PC-3 (cell line): ENCODE measurements at regions of chr1 and their contacts with region 1.

Region 1: DNA sequence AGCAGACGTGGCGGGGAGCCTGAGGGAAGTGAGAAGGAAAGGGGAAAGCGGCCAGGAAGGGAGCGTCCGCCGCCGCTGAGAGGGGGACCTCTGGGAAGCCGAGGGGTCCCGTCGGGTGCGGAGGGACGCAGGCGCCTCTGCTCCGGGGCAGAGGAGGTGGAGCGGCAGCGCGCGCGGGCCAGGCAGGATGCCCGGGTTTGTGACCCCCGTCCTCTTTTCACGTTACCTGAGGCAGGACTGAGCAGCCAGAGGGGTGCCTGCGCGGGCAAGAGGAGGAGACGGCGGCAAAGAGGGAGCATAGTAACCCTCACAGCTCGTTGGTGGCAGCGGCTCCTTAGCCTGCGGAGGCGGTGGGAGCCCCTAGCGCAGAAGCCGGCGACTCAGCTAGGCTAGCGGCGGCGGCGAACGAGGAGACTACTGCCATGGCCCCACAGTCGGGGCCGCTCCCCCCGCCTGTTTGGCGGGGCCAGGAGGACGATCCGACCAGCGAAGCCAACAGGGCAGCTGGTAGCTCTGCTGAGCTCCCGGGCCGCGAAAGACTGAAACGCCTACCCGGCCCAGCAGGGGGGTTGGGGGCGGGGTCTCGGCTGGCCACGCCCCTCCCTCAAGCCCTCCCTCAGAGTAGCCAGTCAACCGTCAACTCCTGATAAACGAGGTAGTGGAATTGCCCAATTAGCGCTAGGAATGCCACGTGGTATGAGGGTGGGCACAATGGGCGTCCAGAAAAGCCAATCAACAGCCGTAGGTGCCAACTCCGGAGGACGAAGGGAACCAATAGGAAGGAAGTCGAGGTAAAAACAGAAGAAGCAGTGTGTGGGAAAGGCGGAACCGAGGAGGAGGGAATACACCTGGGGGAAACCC is at the start of gene TESK2:
- DNase-seq: peak; percentile 100
- ATAC-seq: peak; percentile 89
- H3K4me3 ChIP-seq: peak within 1 kb of the TSS; percentile 80
- H3K27ac ChIP-seq: no peak within 1 kb of the TSS
- H3K4me1 ChIP-seq: peaks cover 11% of the 10 kb centered on the region
- H3K27me3 ChIP-seq: no peaks in the 10 kb centered on the region
- CTCF ChIP-seq: no peak
- total RNA-seq, gene TESK2: 6.0 and 6.5 TPM in 2 replicates

Region 2: DNA sequence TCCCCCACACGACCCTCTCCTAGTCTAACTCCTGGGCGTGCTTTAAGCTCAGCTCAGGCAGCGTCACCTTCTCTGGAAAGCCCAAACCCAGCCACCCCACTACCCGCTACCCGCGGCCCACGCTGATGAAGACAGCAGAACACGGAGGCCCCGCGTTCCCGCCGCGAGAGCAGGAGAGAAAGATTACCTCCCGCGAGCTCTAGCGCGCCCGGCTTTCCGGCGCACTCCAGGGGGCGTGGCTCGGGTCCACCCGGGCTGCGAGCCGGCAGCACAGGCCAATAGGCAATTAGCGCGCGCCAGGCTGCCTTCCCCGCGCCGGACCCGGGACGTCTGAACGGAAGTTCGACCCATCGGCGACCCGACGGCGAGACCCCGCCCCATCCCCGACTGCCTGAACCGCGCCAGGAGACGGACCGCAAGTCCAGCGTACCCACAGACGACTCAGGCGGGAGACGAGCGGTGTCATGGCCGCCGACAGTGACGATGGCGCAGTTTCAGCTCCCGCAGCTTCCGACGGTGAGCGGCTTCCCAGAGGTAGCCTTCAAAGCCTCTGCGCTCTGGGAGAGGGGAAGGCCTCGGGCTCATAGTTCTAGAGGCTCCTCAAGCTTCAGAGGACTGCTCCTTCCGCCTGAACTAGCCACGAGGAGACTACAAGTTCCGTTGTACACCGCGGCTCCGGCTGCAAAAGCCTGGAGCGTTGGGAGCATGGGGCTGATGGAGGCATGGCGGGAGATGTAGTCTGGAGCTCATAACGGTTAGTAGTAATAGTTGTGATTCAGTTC is 150.9 kb before region 1 on chr1 and contains the starts of genes MUTYH and TOE1:
- CTCF ChIA-PET with region 1: no interaction called
- POLR2A ChIA-PET with region 1: interaction called, 5 read pairs
- intact Hi-C with region 1: loop called (anchors 5 kb)
- DNase-seq: peak; percentile 93
- ATAC-seq: peak; percentile 80
- H3K4me3 ChIP-seq: peak within 1 kb of the TSS; percentile 83
- H3K27ac ChIP-seq: peak within 1 kb of the TSS; percentile 76
- H3K4me1 ChIP-seq: peaks cover 43% of the 10 kb centered on the region
- H3K27me3 ChIP-seq: no peaks in the 10 kb centered on the region
- CTCF ChIP-seq: no peak
- total RNA-seq, gene MUTYH: 21.4 and 22.8 TPM in 2 replicates
- total RNA-seq, gene TOE1: 18.2 and 19.5 TPM in 2 replicates

Region 3: DNA sequence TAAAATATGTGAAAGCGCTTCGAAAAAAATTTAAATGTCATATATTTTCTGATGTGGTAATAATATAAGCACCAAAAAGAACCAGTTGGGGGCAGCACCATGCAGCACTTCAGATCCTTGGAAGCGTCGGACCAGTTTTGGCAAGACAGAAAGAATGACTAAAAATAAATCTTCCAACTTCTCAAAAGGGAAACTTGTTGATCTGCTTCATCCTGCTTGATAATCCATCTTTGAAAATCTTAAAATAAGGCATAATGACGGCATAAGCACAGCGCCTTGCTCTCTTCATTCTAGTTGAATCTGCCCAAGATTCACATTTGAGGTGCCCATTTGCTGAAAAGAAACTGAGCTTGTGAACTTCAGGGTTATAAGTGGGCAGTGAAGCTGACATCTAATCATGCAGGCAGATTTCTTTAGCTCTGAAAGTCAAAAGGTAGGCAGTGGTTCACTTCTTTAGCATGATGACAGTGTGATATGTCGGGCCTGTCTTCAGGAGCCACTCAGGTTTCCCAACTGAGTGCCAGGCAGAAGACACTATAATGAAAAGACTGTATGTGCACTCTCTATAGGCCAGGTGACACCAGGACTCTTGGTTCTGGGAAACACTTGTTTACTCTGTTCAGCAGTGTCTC is 130.9 kb before region 1 on chr1:
- CTCF ChIA-PET with region 1: interaction called, 20 read pairs
- POLR2A ChIA-PET with region 1: interaction called, 5 read pairs
- intact Hi-C with region 1: loop called (anchors 1 kb)
- DNase-seq: peak; percentile 78
- ATAC-seq: peak; percentile 52
- H3K4me3 ChIP-seq: peak overlapping the region; percentile 28; the same call in 1 of the 2 replicates
- H3K27ac ChIP-seq: no peak overlapping the region
- H3K4me1 ChIP-seq: peaks cover 22% of the 10 kb centered on the region
- H3K27me3 ChIP-seq: no peaks in the 10 kb centered on the region
- CTCF ChIP-seq: peak; percentile 79